Transverse colon (tissue), 4 donors: ENCODE measurements at regions of chr13 and their contacts with region 1.

Region 1: DNA sequence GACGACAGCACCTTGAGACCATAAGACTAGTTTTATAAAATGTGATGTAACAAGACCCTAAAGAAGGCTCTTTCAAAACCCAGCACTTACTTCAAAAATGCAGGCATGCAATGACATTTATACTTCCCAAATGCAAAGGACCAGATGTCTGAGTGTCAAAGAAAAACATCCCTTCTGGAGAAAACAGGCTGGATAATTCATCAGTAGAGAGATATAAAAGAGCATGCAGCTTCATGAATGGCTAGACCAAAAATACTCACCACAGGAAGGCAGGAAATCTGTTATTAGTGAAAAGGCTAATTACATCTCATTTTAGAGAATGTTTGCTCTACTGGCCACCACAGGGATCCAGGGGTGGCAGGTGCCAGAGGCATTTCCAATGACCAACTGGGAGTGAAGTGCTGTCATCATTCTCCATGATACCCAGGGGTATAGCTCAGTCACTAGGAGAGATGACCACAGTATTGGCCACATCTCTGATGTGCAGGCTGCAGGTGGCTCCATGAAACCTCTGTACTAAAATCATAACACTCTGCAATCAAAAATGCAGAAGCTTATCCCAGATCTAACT is 106.5 kb downstream of the LHFPL6 start:
- DNase-seq: no peak
- H3K4me3 ChIP-seq: no peak overlapping the region
- H3K27ac ChIP-seq: no peak overlapping the region
- H3K4me1 ChIP-seq: no peaks in the 10 kb centered on the region
- H3K27me3 ChIP-seq: no peaks in the 10 kb centered on the region
- CTCF ChIP-seq: no peak
- EP300 ChIP-seq: no peak
- POLR2A ChIP-seq: no peak

Region 2: GRCh38 chr13:39531646-39532045 is 35.1 kb after region 1 on chr13:
- in situ Hi-C with region 1: no loop called
- intact Hi-C with region 1: loop called (anchors 1 kb)
- DNase-seq: no peak
- H3K4me3 ChIP-seq: no peak overlapping the region
- H3K27ac ChIP-seq: no peak overlapping the region
- H3K4me1 ChIP-seq: peaks cover 0 to 7% (median 0%) of the 10 kb centered on the region in 4 donors
- H3K27me3 ChIP-seq: no peaks in the 10 kb centered on the region
- CTCF ChIP-seq: no peak
- EP300 ChIP-seq: no peak
- POLR2A ChIP-seq: no peak